ENCODE measurements at regions of chr1 and their contacts with region 1.

Region 1: DNA sequence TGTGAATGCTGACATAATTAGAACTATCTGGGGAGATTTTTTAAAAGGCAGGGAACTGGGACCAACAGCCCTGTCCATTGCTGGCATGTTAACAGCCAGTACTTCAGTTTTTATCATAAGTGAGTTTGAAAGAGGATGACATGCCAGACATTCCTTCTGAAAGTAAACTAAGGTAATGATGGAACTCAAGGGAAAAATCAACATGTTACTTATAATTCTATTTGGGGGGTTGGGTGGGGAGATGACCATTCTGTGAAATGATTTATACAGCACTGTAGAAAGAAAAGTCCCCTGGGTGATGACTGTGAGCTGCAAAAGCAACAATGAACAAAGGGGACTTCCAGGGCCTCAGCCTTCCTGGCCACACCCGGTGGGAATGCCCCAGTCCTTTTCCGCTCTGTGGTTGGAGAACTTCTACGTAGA is 5.4 kb upstream of the LAMC2 start:
- DNase-seq: peak; percentile 86
- H3K4me3 ChIP-seq: no peak overlapping the region
- H3K27ac ChIP-seq: peak overlapping the region; percentile 90
- H3K4me1 ChIP-seq: peaks cover 16% of the 10 kb centered on the region
- H3K27me3 ChIP-seq: no peaks in the 10 kb centered on the region
- CTCF ChIP-seq: no peak
- POLR2A ChIP-seq: no peak

Region 2: DNA sequence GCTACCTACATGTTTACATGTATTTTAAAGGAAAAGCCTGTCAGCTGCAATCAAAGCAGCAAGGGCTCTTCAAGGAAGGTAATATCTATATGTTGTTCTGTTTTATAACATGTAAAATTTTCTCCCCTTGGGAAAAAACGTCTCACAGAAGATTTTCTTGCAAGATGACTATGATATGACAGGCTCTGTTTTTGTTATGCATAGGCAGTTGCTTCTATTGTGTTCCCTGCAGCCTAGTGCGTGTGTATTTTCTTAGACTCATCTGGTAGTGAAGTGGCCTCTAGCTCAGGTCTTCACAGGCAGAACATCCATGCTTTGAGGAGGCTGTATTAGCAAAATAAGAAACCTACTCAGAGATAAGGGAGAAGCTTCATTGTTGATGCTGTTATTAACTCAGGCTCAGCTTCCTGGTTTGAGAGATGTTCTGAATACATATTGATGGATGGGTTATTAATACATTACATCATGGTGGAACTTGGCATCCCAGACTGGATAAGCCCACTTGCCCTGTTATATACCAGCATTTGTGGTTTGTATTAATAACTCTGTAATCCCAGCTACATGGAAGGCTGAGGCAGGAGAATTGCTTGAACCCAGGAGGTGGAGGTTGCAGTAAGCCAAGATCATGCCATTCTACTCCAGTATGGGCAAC is 121.7 kb before region 1 on chr1:
- CTCF ChIA-PET with region 1: no interaction called
- POLR2A ChIA-PET with region 1: no interaction called
- dilution Hi-C with region 1: no loop called
- intact Hi-C with region 1: loop called (anchors 2 kb)
- DNase-seq: peak; percentile 50
- H3K4me3 ChIP-seq: no peak overlapping the region
- H3K27ac ChIP-seq: peak overlapping the region; percentile 85
- H3K4me1 ChIP-seq: peaks cover 24% of the 10 kb centered on the region
- H3K27me3 ChIP-seq: no peaks in the 10 kb centered on the region
- CTCF ChIP-seq: no peak
- POLR2A ChIP-seq: no peak

Region 3: GRCh38 chr1:183164350-183164749 is 16.3 kb before region 1 on chr1:
- CTCF ChIA-PET with region 1: interaction called, 3 read pairs
- POLR2A ChIA-PET with region 1: no interaction called
- dilution Hi-C with region 1: no loop called
- intact Hi-C with region 1: loop called (anchors 1 kb)
- DNase-seq: peak; percentile 44
- H3K4me3 ChIP-seq: no peak overlapping the region
- H3K27ac ChIP-seq: peak overlapping the region; percentile 64
- H3K4me1 ChIP-seq: peaks cover 25% of the 10 kb centered on the region
- H3K27me3 ChIP-seq: no peaks in the 10 kb centered on the region
- CTCF ChIP-seq: no peak
- POLR2A ChIP-seq: no peak

Measured in endothelial cell of umbilical vein (primary cell).